ENCODE measurements at regions of chr1 and their contacts with region 1.

Region 1: DNA sequence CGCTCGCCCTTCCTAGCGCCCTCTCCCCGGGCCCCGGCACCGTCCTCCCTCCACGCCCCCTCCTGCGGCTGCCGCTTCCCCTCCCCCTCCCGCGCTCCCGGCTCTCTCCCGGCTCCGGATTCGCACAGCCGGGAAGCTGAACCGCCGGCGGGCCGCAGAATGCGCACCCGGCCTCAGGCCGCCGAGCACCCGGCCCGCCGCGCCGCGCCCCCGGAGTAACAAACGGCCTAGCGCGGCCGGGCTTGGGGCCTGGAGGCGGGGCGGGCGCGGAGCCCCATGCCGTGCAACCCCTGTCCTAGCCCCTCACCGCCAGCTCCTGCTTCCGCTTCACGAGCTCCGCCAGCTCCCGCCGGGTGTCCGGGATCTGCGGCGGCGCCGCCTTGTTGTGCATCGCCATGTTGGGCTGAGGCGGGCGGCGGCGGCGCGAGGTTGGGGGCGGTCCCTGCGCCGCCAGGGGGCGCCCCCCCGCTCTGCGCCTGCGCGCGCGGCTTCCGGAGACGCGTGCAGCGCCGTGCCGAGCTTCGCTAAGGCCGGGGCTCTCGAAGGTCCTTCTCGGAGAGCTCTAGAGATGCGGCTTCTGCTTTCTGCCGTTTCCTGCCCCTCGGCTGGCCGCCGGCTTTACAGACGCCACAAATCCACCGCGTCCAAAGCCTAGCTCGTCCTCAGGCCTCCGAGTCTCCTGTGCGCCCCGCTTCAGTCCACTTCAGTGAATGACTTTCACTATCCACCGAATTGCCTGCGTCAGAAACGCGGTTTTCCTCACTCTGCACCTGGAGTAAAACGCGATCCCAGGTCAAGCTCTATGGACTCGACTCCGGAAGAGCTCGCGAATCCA is at the start of gene MEAF6:
- DNase-seq: peak; percentile 87
- ATAC-seq: peak; percentile 96
- H3K4me3 Mint-ChIP-seq: peak within 1 kb of the TSS; percentile 96
- H3K27ac Mint-ChIP-seq: peak within 1 kb of the TSS; percentile 95
- H3K4me1 Mint-ChIP-seq: peaks cover 48% of the 10 kb centered on the region
- H3K27me3 Mint-ChIP-seq: no peaks in the 10 kb centered on the region
- total RNA-seq, gene MEAF6: 70.8 to 73.0 TPM

Region 2: DNA sequence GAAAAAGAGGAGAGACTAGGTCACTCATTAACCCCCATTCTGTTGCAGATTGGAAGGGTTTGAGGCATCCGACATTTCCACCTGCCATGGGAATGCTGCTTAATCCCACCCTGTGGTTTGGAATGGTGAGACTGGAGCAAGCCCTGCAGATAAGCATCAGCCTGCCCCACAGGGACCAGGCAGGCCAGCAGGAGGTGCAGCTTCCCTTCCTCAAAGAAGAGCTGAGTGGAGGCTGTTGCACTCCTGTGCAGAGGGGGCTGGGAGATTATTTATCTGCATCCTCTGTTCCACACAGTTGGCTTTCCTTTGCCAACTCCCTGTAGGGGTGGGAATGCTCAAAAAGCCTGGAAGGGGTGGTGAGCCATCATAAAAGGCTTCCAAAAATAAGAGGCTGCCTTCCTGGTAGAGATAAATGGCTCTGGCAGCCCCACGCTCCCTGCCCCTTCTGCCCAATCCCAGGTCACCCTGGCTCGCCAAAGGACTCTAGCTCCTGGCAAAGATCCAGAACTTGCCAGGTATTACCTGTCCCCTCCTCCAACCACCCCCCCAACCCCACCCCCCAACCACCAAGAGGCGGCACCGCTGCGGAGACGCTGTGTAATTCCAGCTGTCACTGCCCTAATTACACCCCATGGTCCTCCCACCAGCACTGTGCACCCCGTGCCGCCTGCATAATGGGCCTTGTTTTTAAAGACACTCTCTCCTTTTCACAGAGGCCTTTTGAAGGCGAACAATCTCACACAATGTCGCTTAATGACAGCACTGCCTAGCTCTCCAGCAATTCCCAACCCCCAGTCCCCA is 123.2 kb before region 1 on chr1:
- CTCF ChIA-PET with region 1: no interaction called
- POLR2A ChIA-PET with region 1: no interaction called
- DNase-seq: no peak
- ATAC-seq: no peak
- H3K4me3 Mint-ChIP-seq: no peak overlapping the region
- H3K27ac Mint-ChIP-seq: no peak overlapping the region
- H3K4me1 Mint-ChIP-seq: no peaks in the 10 kb centered on the region
- H3K27me3 Mint-ChIP-seq: peaks cover 11% of the 10 kb centered on the region

Region 3: DNA sequence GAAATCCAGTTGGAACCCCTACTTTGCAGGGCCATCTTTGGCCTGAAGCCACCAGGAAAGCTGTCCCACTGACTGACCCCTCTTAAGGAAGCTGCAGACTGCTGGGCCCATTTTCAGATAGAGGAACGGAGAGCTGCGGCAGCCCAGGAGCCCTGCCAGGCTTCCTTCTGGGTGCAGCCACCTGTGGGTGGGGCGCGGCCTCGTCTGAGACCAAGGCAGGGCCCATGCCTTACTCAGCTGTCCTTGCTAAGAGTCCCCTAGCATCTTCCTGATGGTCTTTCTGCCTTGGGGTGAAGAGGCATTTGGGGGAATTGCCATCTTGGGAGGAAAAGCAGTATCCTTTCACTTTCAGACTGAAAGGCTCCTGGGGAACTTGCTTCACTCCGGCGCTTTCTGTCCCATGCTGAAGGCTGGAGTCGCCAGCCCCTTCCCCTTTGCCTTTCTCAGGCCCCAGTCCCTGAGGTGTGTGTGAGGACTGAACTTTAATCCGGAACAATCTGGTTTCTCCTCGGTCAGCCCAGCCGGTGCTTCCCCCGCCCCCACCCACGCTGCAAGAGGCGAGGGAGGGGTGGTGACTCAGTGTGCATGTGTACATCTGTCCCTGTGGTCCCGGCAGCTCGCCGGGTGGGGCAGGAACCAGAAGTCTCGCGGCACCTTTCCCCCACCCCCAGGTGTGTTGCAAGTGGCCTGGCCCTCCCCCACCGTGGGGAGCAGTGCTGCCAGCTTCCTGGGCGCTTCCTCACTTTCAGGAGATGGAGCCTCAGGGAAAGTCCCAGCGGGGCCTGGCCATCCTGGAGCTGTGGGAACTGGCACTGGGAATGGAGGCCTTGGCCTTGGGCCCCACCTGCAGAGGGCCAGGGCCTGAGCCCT is 35.1 kb before region 1 on chr1:
- CTCF ChIA-PET with region 1: interaction called, 34 read pairs
- POLR2A ChIA-PET with region 1: interaction called, 22 read pairs
- DNase-seq: peak; percentile 91
- ATAC-seq: peak; percentile 52
- H3K4me3 Mint-ChIP-seq: peak overlapping the region; percentile 90
- H3K27ac Mint-ChIP-seq: peak overlapping the region; percentile 98
- H3K4me1 Mint-ChIP-seq: peaks cover 52% of the 10 kb centered on the region
- H3K27me3 Mint-ChIP-seq: no peaks in the 10 kb centered on the region

Region 4: GRCh38 chr1:37553927-37554808 is 39.6 kb after region 1 on chr1 and contains the start of gene SNIP1:
- CTCF ChIA-PET with region 1: interaction called, 10 read pairs
- POLR2A ChIA-PET with region 1: interaction called, 11 read pairs
- DNase-seq: peak; percentile 95
- ATAC-seq: peak; percentile 87
- H3K4me3 Mint-ChIP-seq: peak within 1 kb of the TSS; percentile 85
- H3K27ac Mint-ChIP-seq: peak within 1 kb of the TSS; percentile 94
- H3K4me1 Mint-ChIP-seq: peaks cover 54% of the 10 kb centered on the region
- H3K27me3 Mint-ChIP-seq: peaks cover 2% of the 10 kb centered on the region
- total RNA-seq, gene SNIP1: 24.1 to 27.7 TPM

Measured in activated CD8-positive, alpha-beta T cell treated with anti-CD3 and anti-CD28 coated beads, Interleukin-2, amount 10 ng/mL, durations not matched to agents 7 days and 5 days (primary cell).